ENCODE measurements at regions of chr20 and their contacts with region 1.

Region 1: GRCh38 chr20:2742934-2743559 is 50.5 kb downstream of the EBF4 start:
- DNase-seq: peak; percentile 71
- H3K4me3 Mint-ChIP-seq: no peak overlapping the region
- H3K27ac Mint-ChIP-seq: no peak overlapping the region
- H3K4me1 Mint-ChIP-seq: peaks cover 33% of the 10 kb centered on the region
- H3K27me3 Mint-ChIP-seq: peaks cover 20% of the 10 kb centered on the region

Region 2: DNA sequence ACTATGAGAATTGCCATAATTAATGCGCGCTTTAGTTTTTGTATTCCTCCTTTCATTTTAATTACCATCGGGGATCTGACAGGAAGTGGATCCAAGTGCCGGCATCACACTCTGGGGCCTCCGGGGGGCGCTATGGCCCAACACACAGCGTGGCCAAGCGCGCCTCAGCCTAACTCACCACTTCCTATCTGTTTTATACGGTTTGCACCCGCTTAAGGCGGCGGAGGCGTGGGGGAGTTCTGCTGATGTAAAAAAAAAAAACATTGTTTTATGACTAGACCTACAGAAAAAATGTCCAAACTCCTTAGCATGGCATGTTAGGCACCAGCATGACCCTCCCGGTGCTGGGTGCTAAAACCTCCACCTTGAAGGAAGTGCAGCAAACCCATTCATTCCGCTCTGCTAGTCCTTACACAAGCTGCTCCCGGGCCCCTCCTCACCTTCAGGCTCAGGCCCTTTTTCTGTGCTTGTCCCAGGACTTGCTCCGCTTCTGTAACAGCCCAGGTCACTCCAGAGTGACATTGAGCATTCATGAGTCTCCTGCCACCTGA is 54.9 kb before region 1 on chr20:
- CTCF ChIA-PET with region 1: interaction called, 29 read pairs
- POLR2A ChIA-PET with region 1: interaction called, 12 read pairs
- DNase-seq: peak; percentile 88
- H3K4me3 Mint-ChIP-seq: peak overlapping the region; percentile 32
- H3K27ac Mint-ChIP-seq: peak overlapping the region; percentile 21
- H3K4me1 Mint-ChIP-seq: peaks cover 26% of the 10 kb centered on the region
- H3K27me3 Mint-ChIP-seq: peaks cover 36% of the 10 kb centered on the region

Region 3: DNA sequence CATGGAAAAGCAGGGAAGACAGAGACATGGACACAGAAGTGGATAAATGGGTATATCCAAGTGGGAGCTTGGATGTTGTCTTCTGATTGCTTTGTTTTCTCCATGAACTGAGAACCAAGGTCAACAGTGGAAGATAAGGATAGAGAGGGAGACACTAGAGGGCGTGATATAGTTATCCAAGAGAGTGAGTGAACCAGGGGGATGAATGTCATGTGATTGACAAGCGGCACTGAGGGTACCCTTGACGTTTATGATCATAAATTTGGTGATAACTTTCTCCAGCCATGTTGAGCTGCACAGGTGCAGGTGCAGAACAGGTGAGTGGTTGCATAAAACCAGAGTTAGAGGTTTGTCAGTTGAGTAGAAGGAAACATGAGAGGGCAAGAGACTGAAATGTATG is 29.8 kb before region 1 on chr20:
- CTCF ChIA-PET with region 1: interaction called, 11 read pairs
- POLR2A ChIA-PET with region 1: interaction called, 3 read pairs
- DNase-seq: no peak
- H3K4me3 Mint-ChIP-seq: no peak overlapping the region
- H3K27ac Mint-ChIP-seq: no peak overlapping the region
- H3K4me1 Mint-ChIP-seq: no peaks in the 10 kb centered on the region
- H3K27me3 Mint-ChIP-seq: peaks cover 4% of the 10 kb centered on the region

Region 4: DNA sequence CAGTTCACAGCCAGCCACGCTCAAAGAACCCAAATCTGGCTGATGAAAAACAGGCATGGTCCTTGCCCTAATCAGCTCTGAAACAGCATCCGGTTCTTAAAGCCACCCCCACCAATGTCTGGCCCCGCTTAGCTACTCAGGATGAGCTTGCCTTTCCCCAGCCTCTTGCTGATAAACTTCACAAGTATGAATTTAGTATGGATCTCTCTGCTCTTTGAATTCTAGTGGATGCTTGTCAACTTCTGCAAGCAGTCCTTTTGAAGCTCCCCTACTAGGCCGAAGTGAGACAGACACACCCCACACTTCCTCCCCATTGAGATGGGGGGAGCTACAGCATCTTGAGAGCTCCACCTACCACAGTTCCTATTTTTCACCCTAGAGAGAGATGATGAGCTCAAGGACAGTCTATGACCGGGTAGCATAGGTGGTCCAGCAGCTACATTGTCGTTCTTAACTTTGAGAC is 13.8 kb before region 1 on chr20:
- CTCF ChIA-PET with region 1: interaction called, 15 read pairs
- POLR2A ChIA-PET with region 1: interaction called, 21 read pairs
- DNase-seq: no peak
- H3K4me3 Mint-ChIP-seq: no peak overlapping the region
- H3K27ac Mint-ChIP-seq: peak overlapping the region; percentile 50
- H3K4me1 Mint-ChIP-seq: peaks cover 7% of the 10 kb centered on the region
- H3K27me3 Mint-ChIP-seq: peaks cover 27% of the 10 kb centered on the region

Region 5: GRCh38 chr20:2890742-2891141 is 147.7 kb after region 1 on chr20:
- CTCF ChIA-PET with region 1: no interaction called
- POLR2A ChIA-PET with region 1: no interaction called
- DNase-seq: no peak
- H3K4me3 Mint-ChIP-seq: no peak overlapping the region
- H3K27ac Mint-ChIP-seq: peak overlapping the region; percentile 4
- H3K4me1 Mint-ChIP-seq: peaks cover 26% of the 10 kb centered on the region
- H3K27me3 Mint-ChIP-seq: no peaks in the 10 kb centered on the region

Measured in activated CD4-positive, alpha-beta memory T cell treated with anti-CD3 and anti-CD28 coated beads, Interleukin-2, amount 10 ng/mL, durations not matched to agents 7 days and 5 days (primary cell).